Left cardiac atrium (tissue), 4 donors: ENCODE measurements at regions of chr20 and their contacts with region 1.

Region 1: GRCh38 chr20:58309575-58310290 is at the start of gene RAB22A:
- DNase-seq: peak; percentile 87
- ATAC-seq: peak; percentile 93 to 97
- total RNA-seq, gene RAB22A: 9.5 to 10.3 TPM

Region 2: DNA sequence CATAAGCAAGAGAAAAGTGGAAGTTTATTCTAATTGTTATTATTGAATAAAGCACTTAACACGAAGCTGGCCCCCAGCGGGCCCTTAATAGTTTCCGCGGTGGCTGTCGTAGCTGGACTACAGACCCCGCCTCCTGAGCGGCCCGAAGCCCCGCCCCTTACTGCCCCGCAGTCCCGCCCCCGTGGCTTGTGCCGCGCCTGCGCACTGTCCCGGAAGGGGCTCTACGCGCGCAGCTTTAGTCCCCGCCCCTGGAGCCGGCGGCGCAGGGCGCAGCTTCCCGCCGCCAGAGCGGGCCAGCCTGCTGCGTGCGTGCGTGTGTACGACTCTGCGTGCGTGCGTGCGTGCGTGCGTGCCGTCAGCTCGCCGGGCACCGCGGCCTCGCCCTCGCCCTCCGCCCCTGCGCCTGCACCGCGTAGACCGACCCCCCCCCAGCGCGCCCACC is 79.2 kb after region 1 on chr20 and contains the start of gene VAPB:
- intact Hi-C with region 1: loop called in 1 of 2 experiments (anchors 10 kb)
- DNase-seq: peak; percentile 95
- ATAC-seq: peak; percentile 100
- total RNA-seq, gene VAPB: 56.5 to 57.3 TPM